AG04449 (cell line): ENCODE measurements at regions of chr10 and their contacts with region 1.

Region 1: GRCh38 chr10:35126530-35127296 is at the start of gene CREM:
- DNase-seq: peak; percentile 61
- H3K4me3 ChIP-seq: peak within 1 kb of the TSS; percentile 74
- CTCF ChIP-seq: peak; percentile 75

Region 2: GRCh38 chr10:34732926-34733325 is 393.8 kb before region 1 on chr10:
- CTCF ChIA-PET with region 1: no interaction called
- POLR2A ChIA-PET with region 1: no interaction called
- DNase-seq: no peak
- H3K4me3 ChIP-seq: no peak overlapping the region
- CTCF ChIP-seq: no peak

Region 3: DNA sequence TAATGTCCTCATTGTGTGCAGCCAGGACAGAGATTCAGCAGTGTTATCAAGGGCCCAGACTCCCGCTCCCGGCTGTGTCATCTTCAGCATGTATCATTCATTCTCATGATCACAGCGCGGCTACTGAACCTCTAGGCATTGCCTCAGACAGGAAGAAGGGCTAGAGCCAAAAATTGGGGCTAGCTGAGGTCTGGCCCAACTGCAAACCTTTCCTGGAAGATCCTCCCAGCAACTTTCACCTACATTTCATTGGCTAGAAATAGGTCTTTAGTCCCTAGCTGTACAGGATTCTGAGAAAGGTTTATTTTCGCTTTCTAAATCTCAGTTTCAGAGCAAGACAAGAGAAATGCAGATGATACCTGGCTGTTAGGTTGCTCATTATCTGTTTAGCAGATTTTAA is 81.8 kb after region 1 on chr10:
- CTCF ChIA-PET with region 1: interaction called, 283 read pairs
- POLR2A ChIA-PET with region 1: no interaction called
- DNase-seq: no peak
- H3K4me3 ChIP-seq: no peak overlapping the region
- CTCF ChIP-seq: no peak

Region 4: DNA sequence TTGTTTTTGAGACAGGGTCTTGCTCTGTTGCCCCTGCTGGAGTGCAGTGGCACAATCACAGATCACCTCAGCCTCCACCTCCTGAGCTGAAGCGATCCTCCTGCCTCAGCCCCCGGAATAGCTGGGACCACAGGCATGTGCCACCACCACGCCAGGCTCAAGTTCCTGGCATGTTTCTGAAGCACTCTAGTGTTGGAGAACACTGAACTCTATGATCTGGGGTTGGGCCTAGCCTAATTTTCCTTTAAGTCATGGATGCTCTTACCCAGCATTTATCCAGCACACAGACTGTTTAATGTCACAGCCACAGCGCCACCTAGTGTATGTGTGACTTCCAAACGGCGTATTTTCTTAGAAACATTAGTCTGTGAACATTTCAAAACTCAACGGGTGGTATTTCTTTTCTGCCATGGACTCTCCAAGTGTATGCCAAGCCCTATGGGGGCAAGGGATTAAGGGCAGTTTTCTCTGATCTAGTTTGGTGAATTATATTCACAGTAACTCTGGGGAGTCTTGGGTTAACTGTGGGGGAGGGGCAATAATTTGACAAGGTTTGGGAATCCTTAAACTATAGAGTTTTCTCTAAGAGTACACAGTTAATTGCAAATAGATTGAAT is 91.7 kb after region 1 on chr10:
- CTCF ChIA-PET with region 1: interaction called, 283 read pairs
- POLR2A ChIA-PET with region 1: no interaction called
- DNase-seq: no peak
- H3K4me3 ChIP-seq: no peak overlapping the region
- CTCF ChIP-seq: peak; percentile 71

Region 5: GRCh38 chr10:35533565-35533964 is 406.9 kb after region 1 on chr10:
- CTCF ChIA-PET with region 1: no interaction called
- POLR2A ChIA-PET with region 1: no interaction called
- DNase-seq: no peak
- H3K4me3 ChIP-seq: no peak overlapping the region
- CTCF ChIP-seq: no peak